ENCODE measurements at regions of chr12 and their contacts with region 1.

Region 1: GRCh38 chr12:43221216-43221615 is 330.8 kb downstream of the ADAMTS20 start:
- DNase-seq: no peak
- ATAC-seq: no peak
- H3K4me3 ChIP-seq: no peak overlapping the region
- H3K27ac ChIP-seq: no peak overlapping the region
- H3K4me1 ChIP-seq: no peaks in the 10 kb centered on the region
- H3K27me3 ChIP-seq: no peaks in the 10 kb centered on the region
- CTCF ChIP-seq: no peak

Region 2: DNA sequence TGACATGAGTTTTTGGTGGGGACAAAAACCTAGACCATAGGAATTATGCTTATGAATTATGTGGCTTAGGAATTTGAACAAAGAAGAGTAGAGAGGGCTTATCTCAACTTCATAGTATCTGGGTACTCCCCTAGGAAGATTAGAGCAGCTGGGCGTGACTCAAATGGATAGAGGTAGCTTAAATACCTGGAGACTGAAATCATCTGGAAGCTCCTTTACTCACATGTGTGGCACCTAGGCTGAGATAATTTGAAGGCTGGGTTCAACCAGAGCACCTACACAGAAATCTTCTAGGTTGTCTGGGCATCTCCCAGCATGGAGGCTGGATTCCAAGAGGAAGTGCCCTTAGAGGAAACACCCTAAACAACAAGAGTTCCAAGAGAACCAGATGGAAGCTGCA is 63.1 kb before region 1 on chr12:
- CTCF ChIA-PET with region 1: no interaction called
- POLR2A ChIA-PET with region 1: interaction called, 12 read pairs
- in situ Hi-C with region 1: no loop called
- intact Hi-C with region 1: no loop called
- DNase-seq: no peak
- ATAC-seq: no peak
- H3K4me3 ChIP-seq: no peak overlapping the region
- H3K27ac ChIP-seq: no peak overlapping the region
- H3K4me1 ChIP-seq: no peaks in the 10 kb centered on the region
- H3K27me3 ChIP-seq: no peaks in the 10 kb centered on the region
- CTCF ChIP-seq: no peak

Measured in Panc1 (cell line).